Mucosa of descending colon (tissue), 3 donors: ENCODE measurements at regions of chr3 and their contacts with region 1.

Region 1: GRCh38 chr3:156554842-156555687 is at the start of gene SSR3:
- DNase-seq: peak; percentile 99
- ATAC-seq: peak; percentile 100
- H3K4me3 ChIP-seq: peak within 1 kb of the TSS; percentile 87
- H3K4me1 ChIP-seq: peaks cover 5% of the 10 kb centered on the region
- CTCF ChIP-seq: no peak
- total RNA-seq, gene SSR3: 97.9 to 125 (median 123) TPM

Region 2: GRCh38 chr3:156674046-156674910 is 119.2 kb after region 1 on chr3 and contains the start of gene TIPARP:
- intact Hi-C with region 1: loop called (anchors 10 kb)
- DNase-seq: peak; percentile 100
- ATAC-seq: peak; percentile 93
- H3K4me3 ChIP-seq: peak within 1 kb of the TSS; percentile 86
- H3K4me1 ChIP-seq: peaks cover 25% of the 10 kb centered on the region
- CTCF ChIP-seq: peak; percentile 86
- total RNA-seq, gene TIPARP: 26.4 to 28.6 (median 26.7) TPM

Region 3: DNA sequence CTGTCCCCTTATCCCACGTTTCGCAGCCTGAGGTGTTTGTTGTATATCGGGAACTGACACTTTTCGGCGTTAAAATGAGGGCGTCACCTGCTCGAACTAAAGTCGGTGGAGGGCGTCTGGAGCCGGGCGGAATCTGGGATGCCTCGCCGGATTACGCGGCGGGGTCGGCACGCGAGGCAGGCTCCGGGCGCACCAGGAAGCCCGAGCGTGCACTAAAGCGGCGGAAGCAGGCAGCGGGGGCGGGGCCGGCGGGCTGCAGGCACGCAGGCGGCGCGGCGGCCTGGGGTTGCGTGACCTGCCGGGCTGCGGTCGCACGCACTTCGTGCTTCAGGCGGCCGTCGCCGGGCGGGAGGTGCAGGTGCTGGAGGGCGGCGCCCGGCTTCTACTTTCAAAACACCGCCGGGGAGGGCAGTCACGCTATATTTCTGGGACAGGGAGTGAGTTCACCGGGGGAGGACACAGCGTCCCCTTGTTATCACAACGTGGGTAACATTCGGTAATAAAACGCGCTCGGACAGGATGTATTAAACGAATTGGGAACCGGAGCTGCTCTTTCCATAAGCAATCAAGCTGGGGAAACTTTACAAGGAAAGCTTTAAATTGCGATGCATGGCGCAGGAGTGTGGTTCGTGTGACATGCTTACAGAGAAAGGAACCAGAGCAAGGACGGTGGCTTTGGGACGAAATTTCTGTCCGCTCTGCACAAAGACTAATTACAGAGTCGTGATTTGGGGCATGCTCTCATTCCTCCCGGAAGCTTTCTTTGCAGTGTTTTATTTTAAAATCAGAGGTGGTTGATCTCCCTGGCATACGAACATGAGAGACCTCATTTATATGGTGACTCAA is 262.0 kb after region 1 on chr3:
- intact Hi-C with region 1: loop called in 1 of 2 experiments (anchors 10 kb)
- DNase-seq: peak; percentile 92 to 94 (median 93)
- ATAC-seq: peak; percentile 89
- H3K4me3 ChIP-seq: peak overlapping the region; percentile 26
- H3K4me1 ChIP-seq: peaks cover 25% of the 10 kb centered on the region
- CTCF ChIP-seq: no peak